ENCODE measurements at regions of chr19 and their contacts with region 1.

Region 1: GRCh38 chr19:48455171-48455907 is at the start of gene KCNJ14:
- DNase-seq: no peak
- ATAC-seq: no peak
- H3K4me3 ChIP-seq: no peak within 1 kb of the TSS
- H3K27ac ChIP-seq: no peak within 1 kb of the TSS
- H3K4me1 ChIP-seq: no peaks in the 10 kb centered on the region
- H3K27me3 ChIP-seq: no peaks in the 10 kb centered on the region
- CTCF ChIP-seq: no peak
- total RNA-seq, gene KCNJ14: 2.9 TPM

Region 2: DNA sequence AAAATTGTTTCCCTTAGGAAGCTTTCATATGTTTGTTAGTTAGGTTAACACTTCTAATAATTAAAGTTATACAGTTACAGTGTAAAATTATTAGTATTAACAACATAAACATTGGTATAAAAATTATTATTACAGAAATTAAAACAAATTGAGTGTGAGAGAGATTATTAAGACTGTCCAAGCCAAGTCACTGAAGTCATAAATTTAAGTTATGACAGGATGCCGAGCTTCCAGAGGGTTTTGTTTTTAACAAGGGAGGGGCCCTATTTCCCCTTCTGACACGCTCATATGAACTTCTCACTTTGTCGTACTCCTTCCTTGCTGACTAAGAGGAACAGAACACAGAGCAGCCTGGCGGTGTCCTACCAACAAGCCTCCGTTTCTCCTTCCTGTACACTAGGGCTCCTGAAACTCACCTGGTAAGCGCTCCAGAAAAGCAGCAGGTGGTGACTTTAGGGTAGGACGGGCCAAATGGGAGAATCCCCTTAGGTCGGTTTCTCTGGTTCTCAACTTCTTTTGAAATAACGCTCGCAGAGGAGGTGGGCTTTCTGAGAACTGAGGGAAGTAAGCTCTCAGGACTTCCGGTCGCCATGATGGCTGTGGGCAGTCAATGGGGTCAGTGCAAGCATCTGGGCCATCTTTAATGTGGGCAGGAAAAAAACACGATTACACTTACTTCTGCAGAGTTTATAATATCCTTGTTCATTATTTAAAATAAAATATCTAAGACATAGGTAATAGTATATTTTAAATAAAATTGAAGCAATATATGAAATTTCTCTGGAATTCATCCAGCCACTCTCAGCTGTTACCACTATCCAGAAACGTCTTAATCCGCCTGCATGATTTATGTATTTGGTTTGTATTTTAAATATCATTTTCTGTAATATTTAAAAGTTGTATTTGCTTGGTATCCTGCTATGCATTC is 199.7 kb before region 1 on chr19 and contains the start of gene CARD8:
- CTCF ChIA-PET with region 1: no interaction called
- POLR2A ChIA-PET with region 1: no interaction called
- in situ Hi-C with region 1: no loop called
- intact Hi-C with region 1: no loop called
- DNase-seq: peak; percentile 63
- ATAC-seq: peak; percentile 92
- H3K4me3 ChIP-seq: peak within 1 kb of the TSS; percentile 65 to 81
- H3K27ac ChIP-seq: peak within 1 kb of the TSS; percentile 96
- H3K4me1 ChIP-seq: peaks cover 6% of the 10 kb centered on the region; the same call in 1 of the 2 replicates
- H3K27me3 ChIP-seq: no peaks in the 10 kb centered on the region
- CTCF ChIP-seq: no peak
- total RNA-seq, gene CARD8: 19.9 TPM

Region 3: GRCh38 chr19:48403606-48404005 is 51.7 kb before region 1 on chr19:
- CTCF ChIA-PET with region 1: no interaction called
- POLR2A ChIA-PET with region 1: interaction called, 10 read pairs
- in situ Hi-C with region 1: no loop called
- intact Hi-C with region 1: no loop called
- DNase-seq: no peak
- ATAC-seq: peak; percentile 73
- H3K4me3 ChIP-seq: no peak overlapping the region
- H3K27ac ChIP-seq: no peak overlapping the region
- H3K4me1 ChIP-seq: no peaks in the 10 kb centered on the region
- H3K27me3 ChIP-seq: no peaks in the 10 kb centered on the region
- CTCF ChIP-seq: no peak

Region 4: DNA sequence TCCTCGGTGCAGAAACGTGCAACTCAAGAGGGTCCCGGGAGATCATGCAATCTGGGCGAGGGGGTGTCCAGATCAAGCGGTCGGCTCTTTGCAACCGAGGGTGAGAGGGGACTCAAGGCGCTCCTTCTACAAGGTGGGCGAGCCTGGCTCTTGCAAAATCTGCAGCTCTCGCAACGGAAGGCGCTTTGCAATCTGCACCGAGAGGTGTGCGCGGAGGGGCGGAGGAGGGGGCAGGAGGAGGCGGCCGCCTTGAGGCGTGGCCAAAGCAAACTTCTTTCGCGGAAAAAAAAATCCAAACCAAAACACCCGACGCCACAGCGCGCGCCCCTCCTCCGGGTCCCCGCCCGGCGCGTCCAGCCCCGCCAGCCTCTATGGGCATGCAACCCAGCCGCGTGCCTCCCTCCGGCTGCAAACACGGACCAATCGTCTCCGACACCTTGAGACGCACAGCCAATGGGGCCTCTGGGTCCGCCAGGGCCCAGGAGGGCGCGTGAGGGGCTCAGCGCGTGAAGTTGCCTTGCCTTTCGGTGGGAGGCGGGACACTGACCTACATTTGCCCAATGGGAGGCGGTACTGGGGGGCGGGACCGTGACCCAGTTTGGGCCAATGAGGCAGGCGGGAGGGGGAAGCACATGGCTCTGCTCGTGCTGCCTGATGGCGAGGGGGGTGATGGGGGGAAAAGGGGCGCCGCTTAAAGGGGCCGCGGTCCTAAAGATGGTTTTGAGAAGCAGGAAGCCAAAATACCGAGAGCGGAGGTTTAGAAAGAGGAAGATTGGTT is 182.0 kb after region 1 on chr19 and contains the start of gene DBP:
- CTCF ChIA-PET with region 1: no interaction called
- POLR2A ChIA-PET with region 1: no interaction called
- in situ Hi-C with region 1: no loop called
- intact Hi-C with region 1: no loop called
- DNase-seq: peak; percentile 72
- ATAC-seq: peak; percentile 85
- H3K4me3 ChIP-seq: peak within 1 kb of the TSS; percentile 62 to 71
- H3K27ac ChIP-seq: peak within 1 kb of the TSS; percentile 90
- H3K4me1 ChIP-seq: peaks cover 25% of the 10 kb centered on the region
- H3K27me3 ChIP-seq: no peaks in the 10 kb centered on the region
- CTCF ChIP-seq: no peak
- total RNA-seq, gene DBP: 7.4 TPM

Measured in Panc1 (cell line).